Activated naive CD4-positive, alpha-beta T cell treated with anti-CD3 and anti-CD28 coated beads, Interleukin-2, amount 10 ng/mL, durations not matched to agents 7 days and 5 days (primary cell): ENCODE measurements at regions of chr1 and their contacts with region 1.

Region 1: DNA sequence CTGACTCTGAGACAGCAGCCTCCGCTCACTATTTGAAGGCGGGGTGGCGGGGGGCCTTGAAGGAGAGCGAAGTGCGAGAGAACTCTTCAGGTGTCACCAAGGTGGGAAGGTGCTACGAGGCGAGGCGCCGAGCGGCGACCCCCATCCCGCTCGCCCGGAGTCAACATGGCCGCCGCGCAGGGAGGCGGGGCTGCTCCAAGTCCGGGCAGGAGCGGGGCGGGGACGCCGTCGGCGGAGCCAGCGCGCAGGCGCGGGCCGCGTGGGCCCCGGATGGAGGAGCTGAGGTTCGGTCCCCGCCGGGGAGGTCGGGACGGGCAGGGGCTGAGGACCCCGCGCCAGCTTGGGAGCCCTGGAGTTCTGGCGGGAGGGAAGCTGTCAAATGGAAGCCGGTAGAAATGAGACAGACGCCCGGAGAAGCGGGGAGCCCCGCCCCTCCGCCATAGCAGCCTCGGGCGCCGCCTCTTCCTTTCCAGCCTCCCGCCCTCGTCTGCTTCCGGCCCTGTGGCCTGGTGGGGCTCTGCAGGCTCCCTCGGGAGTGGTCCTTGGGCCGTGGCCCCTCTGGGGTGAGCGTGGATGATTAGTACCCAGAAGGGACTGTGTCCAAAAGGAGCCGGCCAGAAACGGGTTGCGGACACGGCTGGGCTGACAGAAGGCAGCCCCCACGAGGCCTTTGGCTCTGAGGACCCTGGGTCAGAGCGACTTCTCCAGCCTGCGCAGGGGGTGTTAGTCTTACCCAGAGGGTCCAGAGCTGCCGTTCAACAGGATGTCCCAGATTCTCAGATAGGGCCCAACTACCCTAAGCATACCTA is at the start of gene PIGV:
- DNase-seq: peak; percentile 89
- H3K4me3 Mint-ChIP-seq: peak within 1 kb of the TSS; percentile 78
- H3K27ac Mint-ChIP-seq: peak within 1 kb of the TSS; percentile 100
- H3K4me1 Mint-ChIP-seq: peaks cover 76% of the 10 kb centered on the region
- H3K27me3 Mint-ChIP-seq: peaks cover 4% of the 10 kb centered on the region

Region 2: DNA sequence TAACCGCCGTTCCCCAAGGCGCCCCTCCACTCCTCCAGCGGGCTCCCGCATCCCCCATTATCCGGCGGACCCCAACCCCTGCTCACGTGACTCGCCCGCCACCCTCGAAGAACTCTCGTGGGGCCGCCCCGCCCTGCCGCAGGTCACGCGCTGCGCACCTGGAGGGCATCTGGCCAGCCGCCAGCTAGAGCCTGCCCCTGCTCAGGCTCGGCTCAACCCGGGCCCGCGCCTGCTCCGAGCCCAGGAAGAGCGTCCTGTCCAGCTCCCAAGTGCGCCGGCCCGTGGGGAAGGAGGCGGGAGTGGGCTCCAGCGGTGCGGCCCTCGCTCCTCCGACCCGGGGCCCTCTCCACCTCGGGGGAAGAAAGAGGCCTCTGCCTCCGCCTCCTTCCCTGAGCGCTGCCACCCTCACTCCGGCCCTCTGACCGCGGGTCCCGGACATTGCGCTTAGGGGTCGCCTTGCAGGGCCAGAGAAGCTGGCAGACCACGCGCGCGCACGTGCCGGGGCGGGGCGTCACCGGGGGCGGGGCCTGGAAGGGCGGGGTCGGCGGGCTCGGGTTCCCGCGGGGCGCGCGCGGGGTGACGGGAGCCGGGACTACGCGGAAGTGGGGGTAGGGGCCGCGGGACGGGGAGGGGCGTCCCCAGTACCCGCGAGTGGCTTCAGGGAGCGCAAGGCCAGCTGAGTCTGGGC is 287.3 kb before region 1 on chr1:
- CTCF ChIA-PET with region 1: interaction called, 12 read pairs
- DNase-seq: peak; percentile 91
- H3K4me3 Mint-ChIP-seq: peak overlapping the region; percentile 83
- H3K27ac Mint-ChIP-seq: peak overlapping the region; percentile 95
- H3K4me1 Mint-ChIP-seq: peaks cover 37% of the 10 kb centered on the region
- H3K27me3 Mint-ChIP-seq: no peaks in the 10 kb centered on the region

Region 3: GRCh38 chr1:26602378-26602959 is 185.4 kb before region 1 on chr1:
- CTCF ChIA-PET with region 1: interaction called, 211 read pairs
- DNase-seq: peak; percentile 55
- H3K4me3 Mint-ChIP-seq: no peak overlapping the region
- H3K27ac Mint-ChIP-seq: no peak overlapping the region
- H3K4me1 Mint-ChIP-seq: peaks cover 15% of the 10 kb centered on the region
- H3K27me3 Mint-ChIP-seq: peaks cover 37% of the 10 kb centered on the region

Region 4: GRCh38 chr1:26677306-26678115 is 110.4 kb before region 1 on chr1:
- CTCF ChIA-PET with region 1: interaction called, 34 read pairs
- DNase-seq: peak; percentile 63
- H3K4me3 Mint-ChIP-seq: no peak overlapping the region
- H3K27ac Mint-ChIP-seq: peak overlapping the region; percentile 30
- H3K4me1 Mint-ChIP-seq: peaks cover 22% of the 10 kb centered on the region
- H3K27me3 Mint-ChIP-seq: peaks cover 9% of the 10 kb centered on the region

Region 5: GRCh38 chr1:26697978-26698849 is 89.7 kb before region 1 on chr1:
- CTCF ChIA-PET with region 1: interaction called, 41 read pairs
- DNase-seq: peak; percentile 56
- H3K4me3 Mint-ChIP-seq: no peak overlapping the region
- H3K27ac Mint-ChIP-seq: no peak overlapping the region
- H3K4me1 Mint-ChIP-seq: peaks cover 17% of the 10 kb centered on the region
- H3K27me3 Mint-ChIP-seq: no peaks in the 10 kb centered on the region

Region 6: GRCh38 chr1:26811057-26811456 is 23.1 kb after region 1 on chr1:
- CTCF ChIA-PET with region 1: interaction called, 19 read pairs
- DNase-seq: no peak
- H3K4me3 Mint-ChIP-seq: no peak overlapping the region
- H3K27ac Mint-ChIP-seq: no peak overlapping the region
- H3K4me1 Mint-ChIP-seq: peaks cover 26% of the 10 kb centered on the region
- H3K27me3 Mint-ChIP-seq: no peaks in the 10 kb centered on the region

Region 7: GRCh38 chr1:26938004-26938658 is 150.2 kb after region 1 on chr1:
- CTCF ChIA-PET with region 1: no interaction called
- DNase-seq: no peak
- H3K4me3 Mint-ChIP-seq: no peak overlapping the region
- H3K27ac Mint-ChIP-seq: no peak overlapping the region
- H3K4me1 Mint-ChIP-seq: no peaks in the 10 kb centered on the region
- H3K27me3 Mint-ChIP-seq: no peaks in the 10 kb centered on the region